Right ventricle myocardium superior (tissue), 1 donor: ENCODE measurements at regions of chr18 and their contacts with region 1.

Region 1: DNA sequence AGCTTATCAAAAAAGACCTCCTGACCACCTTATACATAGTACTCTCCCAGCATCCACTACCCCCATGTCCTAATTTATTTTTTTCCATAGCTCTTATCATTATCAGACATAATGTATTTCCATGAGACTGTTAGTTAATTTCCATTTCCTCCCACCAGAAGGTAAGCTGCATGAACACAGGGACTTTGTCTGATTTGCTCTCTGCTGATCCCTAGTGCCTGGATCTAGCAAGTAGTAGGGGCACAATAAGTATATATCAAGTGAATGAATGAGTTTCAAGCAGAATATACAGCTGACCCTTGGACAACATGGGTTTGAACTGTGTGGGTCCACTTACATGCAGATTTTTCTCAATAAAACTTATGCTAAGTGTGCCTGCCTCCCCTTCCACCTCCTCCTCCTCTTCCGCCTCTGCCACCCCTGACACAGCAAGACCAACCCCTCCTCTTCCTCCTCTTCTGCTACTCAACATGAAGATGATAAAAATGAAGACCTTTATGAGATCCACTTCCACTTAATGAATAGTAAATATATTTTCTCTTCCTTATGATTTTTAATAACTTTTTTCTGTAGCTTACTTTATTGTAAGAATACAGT is 53.8 kb downstream of the CTAGE1 start:
- DNase-seq: no peak
- ATAC-seq: peak; percentile 63

Region 2: GRCh38 chr18:21997207-21998143 is 366.5 kb before region 1 on chr18:
- intact Hi-C with region 1: loop called (anchors 10 kb)
- DNase-seq: no peak
- ATAC-seq: peak; percentile 86